AG04449 (cell line): ENCODE measurements at regions of chr3 and their contacts with region 1.

Region 1: GRCh38 chr3:45938864-45939263 is 4.4 kb upstream of the CXCR6 start:
- DNase-seq: peak; percentile 69
- H3K4me3 ChIP-seq: no peak overlapping the region
- CTCF ChIP-seq: peak; percentile 93

Region 2: DNA sequence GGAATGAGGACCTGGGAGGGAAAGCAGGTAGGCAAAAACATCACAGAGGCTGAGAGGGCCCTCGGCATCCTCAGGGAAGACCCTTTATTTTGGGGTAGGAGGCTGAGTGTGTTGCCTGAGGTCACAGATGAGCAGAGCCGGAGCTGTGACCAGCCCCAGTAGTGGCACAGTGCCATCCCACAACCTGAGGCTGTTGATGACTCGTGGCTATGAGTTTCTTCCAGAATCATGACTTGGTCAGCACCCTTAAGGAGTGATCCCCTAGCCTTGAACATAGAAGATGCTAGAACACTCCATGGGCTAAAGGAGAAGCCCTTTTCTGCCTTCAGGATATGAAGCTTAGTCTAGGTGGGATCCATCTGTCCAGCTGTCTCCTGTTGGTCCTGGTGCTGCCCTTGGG is 15.1 kb before region 1 on chr3:
- CTCF ChIA-PET with region 1: interaction called, 42 read pairs
- POLR2A ChIA-PET with region 1: no interaction called
- DNase-seq: no peak
- H3K4me3 ChIP-seq: no peak overlapping the region
- CTCF ChIP-seq: no peak

Region 3: GRCh38 chr3:45968706-45969105 is 29.8 kb after region 1 on chr3:
- CTCF ChIA-PET with region 1: interaction called, 16 read pairs
- POLR2A ChIA-PET with region 1: interaction called, 3 read pairs
- DNase-seq: no peak
- H3K4me3 ChIP-seq: no peak overlapping the region
- CTCF ChIP-seq: no peak

Region 4: GRCh38 chr3:46065294-46065721 is 126.4 kb after region 1 on chr3:
- CTCF ChIA-PET with region 1: interaction called, 27 read pairs
- POLR2A ChIA-PET with region 1: no interaction called
- DNase-seq: no peak
- H3K4me3 ChIP-seq: no peak overlapping the region
- CTCF ChIP-seq: no peak

Region 5: DNA sequence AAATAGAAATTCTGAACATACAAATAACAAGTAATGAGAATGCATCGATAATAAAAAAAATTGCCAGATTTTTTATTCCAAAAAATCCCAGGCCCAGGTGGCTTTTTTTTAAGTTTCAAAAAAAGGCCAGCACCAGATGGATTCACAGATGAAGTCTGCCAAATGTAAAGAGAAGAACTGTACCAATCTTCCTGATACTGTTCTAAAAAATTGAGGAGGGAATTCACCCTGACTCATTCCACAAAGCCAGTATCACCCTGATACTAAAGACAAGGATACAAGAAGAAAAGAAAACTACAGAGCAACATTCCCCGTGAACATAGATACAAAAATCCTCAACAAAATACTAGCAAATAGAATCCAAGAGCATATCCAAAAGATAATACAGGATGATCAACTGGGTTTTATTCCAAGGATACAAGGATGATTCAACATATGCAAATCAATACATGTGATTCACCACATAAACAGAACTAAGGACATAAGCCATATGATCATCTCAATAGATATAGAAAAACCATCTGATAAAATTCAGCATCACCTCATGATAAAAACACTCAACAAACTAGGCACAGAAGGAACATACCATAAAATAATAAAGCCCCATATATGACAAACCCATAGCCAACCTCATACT is 132.5 kb after region 1 on chr3:
- CTCF ChIA-PET with region 1: interaction called, 918 read pairs
- POLR2A ChIA-PET with region 1: no interaction called
- DNase-seq: no peak
- H3K4me3 ChIP-seq: no peak overlapping the region
- CTCF ChIP-seq: no peak

Region 6: DNA sequence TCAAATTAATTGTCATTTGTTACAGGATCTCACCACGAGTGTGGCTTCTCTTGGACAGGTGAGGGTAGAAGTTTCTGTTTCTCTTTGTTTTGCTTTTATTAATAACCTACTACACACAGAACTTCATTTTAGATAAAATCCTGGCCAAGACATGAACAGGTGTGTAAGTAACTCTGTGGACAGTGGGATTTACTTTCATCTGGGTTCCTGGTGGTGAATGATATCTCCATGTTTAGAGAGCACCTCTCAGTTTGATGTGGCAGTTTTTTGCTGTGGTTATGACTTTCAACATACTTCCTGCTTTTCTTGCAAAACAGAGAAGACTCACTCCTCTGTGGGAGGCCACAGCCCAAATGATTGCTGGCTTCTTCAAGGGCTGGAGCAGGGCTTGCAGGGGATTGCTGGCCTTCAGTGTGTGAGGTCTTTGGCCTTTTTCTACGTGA is 159.5 kb after region 1 on chr3:
- CTCF ChIA-PET with region 1: interaction called, 14 read pairs
- POLR2A ChIA-PET with region 1: no interaction called
- DNase-seq: no peak
- H3K4me3 ChIP-seq: no peak overlapping the region
- CTCF ChIP-seq: no peak